Naive thymus-derived CD8-positive, alpha-beta T cell (primary cell): ENCODE measurements at regions of chr19 and their contacts with region 1.

Region 1: DNA sequence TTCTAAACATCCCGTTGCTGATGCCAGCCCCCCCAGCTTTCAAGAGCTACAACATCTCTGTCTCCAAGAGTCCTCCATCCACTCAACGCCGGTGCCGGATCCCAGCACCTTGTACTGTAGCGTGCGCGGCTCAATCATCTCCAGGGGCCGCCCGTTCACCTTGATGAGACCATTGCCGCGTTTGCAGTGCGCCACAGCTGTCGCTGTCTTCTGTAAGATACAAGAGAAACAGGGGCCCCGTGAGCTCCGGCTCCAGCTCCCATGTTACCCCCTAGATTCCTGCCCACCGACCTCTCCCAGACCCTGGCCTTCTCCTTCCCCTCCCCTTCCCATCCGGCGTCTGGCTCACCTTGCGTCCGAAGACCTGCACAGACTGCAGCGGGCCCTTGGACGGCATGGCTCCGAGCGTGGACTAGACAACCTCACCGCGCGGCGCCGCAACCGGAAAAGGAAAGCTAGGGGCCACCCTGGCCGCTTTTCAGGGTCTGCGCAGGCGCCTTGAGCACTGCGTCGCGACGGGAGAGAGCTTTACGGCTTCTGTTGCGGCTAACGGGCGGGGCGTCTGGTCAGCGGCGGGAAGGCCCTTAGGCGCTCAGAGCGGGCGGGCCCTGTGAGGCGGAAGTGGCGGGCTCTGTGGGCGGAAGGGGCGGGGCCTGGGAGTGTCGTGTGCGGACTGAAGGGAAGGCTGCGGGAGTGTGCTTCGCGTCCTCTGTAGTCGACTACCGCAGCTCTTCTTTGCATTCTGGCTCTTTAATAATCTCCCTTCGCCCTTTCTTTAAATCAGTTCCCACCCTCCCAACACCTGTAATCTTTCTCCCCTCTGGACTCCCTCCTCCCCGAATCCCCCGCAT is at the start of gene RPS16:
- DNase-seq: peak; percentile 97 to 99 (median 98)
- ATAC-seq: peak; percentile 94 to 95
- H3K4me3 Mint-ChIP-seq: peak within 1 kb of the TSS; percentile 95 to 100 (median 100)
- H3K27ac Mint-ChIP-seq: peak within 1 kb of the TSS; percentile 97 to 99 (median 98)
- H3K4me1 Mint-ChIP-seq: peaks cover 21 to 53% (median 40%) of the 10 kb centered on the region in 4 donors
- H3K27me3 Mint-ChIP-seq: peaks cover 0 to 5% (median 0%) of the 10 kb centered on the region in 5 donors
- polyA plus RNA-seq, gene RPS16: 2,588 to 2,812 (median 2,742) TPM

Region 2: GRCh38 chr19:39307046-39307823 is 128.5 kb before region 1 on chr19:
- POLR2A ChIA-PET with region 1: no interaction called
- DNase-seq: no peak
- ATAC-seq: no peak
- H3K4me3 Mint-ChIP-seq: no peak overlapping the region
- H3K27ac Mint-ChIP-seq: no peak overlapping the region
- H3K4me1 Mint-ChIP-seq: peaks cover 4 to 30% (median 20%) of the 10 kb centered on the region in 4 donors
- H3K27me3 Mint-ChIP-seq: no peaks in the 10 kb centered on the region

Region 3: DNA sequence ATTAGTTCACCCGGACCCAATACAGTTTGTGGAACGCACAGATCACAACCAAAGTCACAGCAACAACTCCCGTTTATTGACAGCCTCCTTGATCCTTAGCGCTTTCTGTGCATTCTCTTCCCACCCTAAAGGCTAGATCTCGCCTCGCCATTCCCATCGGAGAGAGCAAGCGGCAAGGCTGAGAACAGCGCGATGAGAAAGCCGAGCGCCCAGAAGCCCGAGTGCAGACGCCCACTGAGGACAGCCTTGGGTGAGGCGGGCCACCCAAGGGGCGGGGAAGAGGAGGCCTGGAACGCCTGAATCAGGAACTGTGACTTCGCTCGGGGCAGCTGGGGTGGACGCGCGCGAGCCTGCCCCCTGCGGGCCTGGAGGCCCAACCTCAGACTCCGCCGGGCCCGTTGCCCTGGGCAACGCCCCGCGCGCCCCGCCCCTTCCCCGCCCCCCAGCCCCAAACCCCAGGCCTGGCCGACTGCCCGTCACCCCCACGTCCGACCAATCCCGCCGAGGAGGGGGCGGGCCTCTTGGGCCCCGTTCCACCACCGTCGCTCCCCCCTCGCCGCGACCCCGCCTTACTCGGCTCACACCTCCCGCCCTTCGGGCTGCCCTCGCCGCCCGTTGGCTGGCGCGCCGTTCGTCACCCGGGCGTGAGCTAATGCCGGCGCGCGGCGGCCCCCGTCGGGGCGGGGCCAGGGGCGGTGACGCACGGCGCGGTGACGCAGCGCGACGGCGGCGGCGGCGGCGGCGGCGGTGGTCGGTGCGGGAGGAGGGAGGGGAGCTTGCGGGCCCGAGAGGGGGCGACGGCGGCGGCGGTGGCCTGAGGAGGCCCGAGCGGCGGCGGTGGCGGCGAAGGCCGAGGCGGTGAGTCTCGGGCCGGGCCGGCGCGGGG is 93.8 kb before region 1 on chr19 and contains the start of gene SAMD4B:
- POLR2A ChIA-PET with region 1: interaction called, 12 read pairs
- DNase-seq: peak; percentile 94 to 100 (median 99)
- ATAC-seq: peak; percentile 85 to 87
- H3K4me3 Mint-ChIP-seq: peak within 1 kb of the TSS; percentile 94 to 99 (median 98)
- H3K27ac Mint-ChIP-seq: peak within 1 kb of the TSS; percentile 95 to 99 (median 97)
- H3K4me1 Mint-ChIP-seq: peaks cover 53 to 78% (median 72%) of the 10 kb centered on the region in 4 donors
- H3K27me3 Mint-ChIP-seq: no peaks in the 10 kb centered on the region
- polyA plus RNA-seq, gene SAMD4B: 5.4 to 12.3 (median 6.4) TPM

Region 4: DNA sequence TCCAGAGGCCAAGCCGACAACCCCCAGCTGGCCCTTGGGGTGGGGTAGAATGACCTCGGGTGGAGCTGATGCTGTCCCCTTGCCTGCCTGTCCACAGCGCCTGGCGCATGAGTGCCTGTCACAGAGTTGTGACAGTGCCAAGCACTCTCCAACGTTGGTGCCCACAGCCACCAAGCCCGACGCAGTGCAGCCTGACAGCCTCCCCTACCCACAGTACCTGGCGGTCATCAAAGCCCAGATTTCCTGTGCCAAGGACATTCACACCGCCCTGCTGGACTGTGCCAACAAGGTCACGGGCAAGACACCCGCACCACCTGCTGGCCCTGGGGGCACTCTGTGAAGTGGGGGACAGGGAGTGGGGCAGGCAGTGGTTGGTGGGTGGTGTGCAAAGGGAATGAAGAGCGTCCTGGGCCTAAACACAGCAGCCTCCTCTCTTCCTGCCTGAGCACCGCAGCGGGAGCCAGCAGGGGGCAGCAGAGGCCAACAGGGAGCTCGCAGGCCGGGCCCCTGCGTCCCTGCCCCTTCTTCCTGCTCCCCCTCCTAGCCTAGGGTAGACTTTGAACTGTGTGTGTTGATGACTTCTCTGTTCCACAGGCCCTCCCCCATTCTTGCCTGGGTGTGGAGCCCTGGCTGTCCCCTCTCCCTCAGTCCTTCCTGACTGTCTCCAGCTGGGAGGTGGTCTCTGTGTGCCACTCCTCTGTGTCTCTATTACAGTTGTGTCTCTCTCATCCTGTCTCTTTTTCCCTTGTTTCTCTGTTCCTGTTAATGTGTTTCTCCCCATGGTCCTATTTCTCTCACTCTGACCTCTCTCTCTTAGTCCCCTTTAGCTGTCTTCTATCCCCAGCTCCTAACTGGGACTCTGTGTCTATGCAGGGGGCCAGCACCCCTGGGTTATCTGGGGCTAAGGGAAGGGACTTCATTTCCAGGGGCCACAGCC is 38.1 kb before region 1 on chr19:
- POLR2A ChIA-PET with region 1: interaction called, 68 read pairs
- DNase-seq: peak; percentile 86 to 96 (median 94)
- ATAC-seq: peak; percentile 52
- H3K4me3 Mint-ChIP-seq: peak overlapping the region; percentile 40 to 84 (median 78)
- H3K27ac Mint-ChIP-seq: peak overlapping the region; percentile 90 to 99 (median 96)
- H3K4me1 Mint-ChIP-seq: peaks cover 27 to 70% (median 63%) of the 10 kb centered on the region in 4 donors
- H3K27me3 Mint-ChIP-seq: no peaks in the 10 kb centered on the region

Region 5: DNA sequence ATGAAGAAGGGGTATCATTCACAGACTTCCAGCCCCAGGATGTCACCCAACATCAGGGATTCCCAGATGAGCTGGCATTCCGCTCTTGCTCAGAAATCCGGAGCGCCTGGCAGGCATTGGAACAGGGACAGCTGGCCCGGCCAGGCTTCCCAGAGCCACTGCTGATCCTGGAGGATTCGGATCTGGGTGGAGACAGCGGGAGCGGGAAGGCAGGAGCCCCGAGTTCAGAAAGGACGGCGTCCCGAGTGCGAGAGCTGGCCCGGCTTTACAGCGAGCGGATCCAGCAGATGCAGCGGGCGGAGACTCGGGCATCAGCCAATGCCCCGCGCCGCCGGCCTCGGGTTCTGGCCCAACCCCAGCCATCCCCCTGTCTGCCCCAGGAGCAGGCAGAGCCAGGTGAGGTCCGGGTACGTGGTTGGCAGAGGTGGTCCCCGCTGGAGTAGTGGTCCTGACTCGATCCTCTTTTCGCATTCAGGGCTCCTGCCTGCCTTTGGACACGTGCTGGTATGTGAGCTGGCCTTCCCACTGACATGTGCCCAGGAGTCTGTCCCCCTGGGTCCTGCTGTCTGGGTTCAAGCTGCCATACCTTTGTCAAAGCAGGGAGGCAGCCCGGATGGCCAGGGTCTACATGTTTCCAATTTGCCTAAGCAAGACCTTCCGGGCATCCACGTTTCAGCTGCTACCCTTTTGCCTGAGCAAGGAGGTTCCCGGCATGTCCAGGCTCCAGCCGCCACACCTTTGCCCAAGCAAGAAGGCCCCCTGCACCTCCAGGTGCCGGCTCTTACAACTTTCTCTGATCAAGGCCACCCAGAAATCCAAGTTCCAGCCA is 12.3 kb before region 1 on chr19:
- POLR2A ChIA-PET with region 1: interaction called, 15 read pairs
- DNase-seq: no peak
- ATAC-seq: no peak
- H3K4me3 Mint-ChIP-seq: no peak overlapping the region
- H3K27ac Mint-ChIP-seq: peak overlapping the region in 2 of 10 donors; percentile 22 to 79
- H3K4me1 Mint-ChIP-seq: peaks cover 0 to 10% (median 0%) of the 10 kb centered on the region in 4 donors
- H3K27me3 Mint-ChIP-seq: no peaks in the 10 kb centered on the region

Region 6: GRCh38 chr19:39497996-39498797 is 62.5 kb after region 1 on chr19:
- POLR2A ChIA-PET with region 1: interaction called, 10 read pairs
- DNase-seq: peak in 3 of 10 donors; percentile 16 to 26 (median 25)
- ATAC-seq: peak; percentile 50 to 59
- H3K4me3 Mint-ChIP-seq: peak overlapping the region; percentile 38 to 84 (median 72)
- H3K27ac Mint-ChIP-seq: peak overlapping the region in 3 of 10 donors; percentile 4 to 37 (median 31)
- H3K4me1 Mint-ChIP-seq: peaks cover 16 to 31% (median 22%) of the 10 kb centered on the region in 4 donors
- H3K27me3 Mint-ChIP-seq: peaks cover 19 to 55% (median 30%) of the 10 kb centered on the region in 5 donors